ENCODE measurements at regions of chr7 and their contacts with region 1.

Region 1: DNA sequence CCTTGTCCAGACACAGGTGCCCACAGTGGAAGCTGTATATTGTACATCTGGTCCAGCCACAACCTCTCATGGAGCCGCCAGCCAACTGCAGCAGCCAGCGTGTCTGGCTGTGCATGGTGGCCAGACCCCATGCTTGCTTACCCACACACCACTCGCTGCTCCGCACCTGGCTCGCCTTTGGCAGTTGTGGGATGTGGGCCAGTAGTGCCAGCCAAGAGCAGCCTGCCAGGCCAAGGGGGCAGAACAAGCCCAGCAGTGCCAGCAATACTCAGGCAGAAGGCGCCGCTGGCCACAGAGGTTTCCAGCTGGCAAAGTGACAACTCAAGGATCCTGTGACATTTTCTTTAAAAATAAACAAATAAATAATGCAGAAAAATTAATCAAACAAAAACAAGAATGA is 11.7 kb upstream of the TMEM243 start:
- DNase-seq: peak; percentile 86 to 90
- H3K4me3 ChIP-seq: no peak overlapping the region
- H3K27ac ChIP-seq: peak overlapping the region in 2 of 3 donors; percentile 32 to 71
- H3K4me1 ChIP-seq: peaks cover 7 to 21% of the 10 kb centered on the region in 2 donors
- H3K27me3 ChIP-seq: no peaks in the 10 kb centered on the region
- CTCF ChIP-seq: no peak
- POLR2A ChIP-seq: no peak

Region 2: GRCh38 chr7:86939197-86939814 is 291.9 kb before region 1 on chr7:
- intact Hi-C with region 1: loop called (anchors 5 kb)
- DNase-seq: peak; percentile 21 to 29
- H3K4me3 ChIP-seq: no peak overlapping the region
- H3K27ac ChIP-seq: no peak overlapping the region
- H3K4me1 ChIP-seq: no peaks in the 10 kb centered on the region
- H3K27me3 ChIP-seq: no peaks in the 10 kb centered on the region
- CTCF ChIP-seq: peak; percentile 23 to 87 (median 66)
- POLR2A ChIP-seq: no peak

Region 3: GRCh38 chr7:86949052-86949778 is 282.0 kb before region 1 on chr7:
- intact Hi-C with region 1: loop called (anchors 5 kb)
- DNase-seq: no peak
- H3K4me3 ChIP-seq: no peak overlapping the region
- H3K27ac ChIP-seq: no peak overlapping the region
- H3K4me1 ChIP-seq: no peaks in the 10 kb centered on the region
- H3K27me3 ChIP-seq: no peaks in the 10 kb centered on the region
- CTCF ChIP-seq: no peak
- POLR2A ChIP-seq: no peak

Region 4: DNA sequence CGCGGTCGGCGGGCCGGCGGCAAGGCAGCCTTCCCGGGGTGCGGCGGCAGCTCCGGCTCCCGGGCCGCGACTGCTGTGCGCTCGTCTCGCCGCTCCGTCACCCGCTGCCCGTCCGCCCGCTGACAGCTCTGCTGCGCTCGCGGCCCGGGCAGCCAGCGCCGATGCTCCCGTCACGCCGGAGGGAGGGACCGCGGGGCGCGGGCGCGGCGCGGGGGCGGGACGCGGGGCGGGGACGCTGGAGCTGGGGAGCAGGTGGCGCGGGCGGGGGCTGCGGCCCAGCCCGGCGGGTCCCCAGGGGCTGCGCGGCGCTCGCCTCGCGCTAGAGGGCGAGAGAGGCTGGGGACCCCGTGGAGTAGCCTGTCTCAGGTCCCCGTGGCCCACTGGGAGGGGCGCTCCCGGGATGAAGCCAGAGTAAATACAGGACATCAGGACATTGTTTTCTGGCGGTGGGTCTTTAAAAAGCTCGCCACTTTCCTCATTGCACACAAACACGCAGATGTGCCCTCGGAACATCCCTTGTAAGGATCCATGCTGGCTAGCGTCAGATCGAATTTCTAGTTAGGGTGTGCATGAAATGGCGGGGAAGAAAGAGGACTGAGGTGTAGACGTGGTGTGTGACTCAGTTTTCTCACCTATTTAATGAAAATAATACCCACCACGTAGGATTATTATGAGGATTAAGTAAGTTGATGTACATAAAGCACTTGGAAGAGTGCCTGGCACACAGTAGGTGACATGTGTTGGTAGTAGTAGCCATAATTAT is 171.6 kb before region 1 on chr7 and contains the start of gene ELAPOR2:
- intact Hi-C with region 1: loop called (anchors 10 kb)
- DNase-seq: peak; percentile 84
- H3K4me3 ChIP-seq: peak within 1 kb of the TSS; percentile 15 to 56 (median 24)
- H3K27ac ChIP-seq: peak within 1 kb of the TSS; percentile 6 to 75 (median 59)
- H3K4me1 ChIP-seq: peaks cover 3 to 5% of the 10 kb centered on the region in 2 donors
- H3K27me3 ChIP-seq: no peaks in the 10 kb centered on the region
- CTCF ChIP-seq: peak in 4 of 6 experiments; percentile 30 to 69 (median 54)
- POLR2A ChIP-seq: peak in 1 of 2 donors; percentile 86
- total RNA-seq, gene ELAPOR2: 25.4 to 31.3 (median 25.7) TPM

Region 5: DNA sequence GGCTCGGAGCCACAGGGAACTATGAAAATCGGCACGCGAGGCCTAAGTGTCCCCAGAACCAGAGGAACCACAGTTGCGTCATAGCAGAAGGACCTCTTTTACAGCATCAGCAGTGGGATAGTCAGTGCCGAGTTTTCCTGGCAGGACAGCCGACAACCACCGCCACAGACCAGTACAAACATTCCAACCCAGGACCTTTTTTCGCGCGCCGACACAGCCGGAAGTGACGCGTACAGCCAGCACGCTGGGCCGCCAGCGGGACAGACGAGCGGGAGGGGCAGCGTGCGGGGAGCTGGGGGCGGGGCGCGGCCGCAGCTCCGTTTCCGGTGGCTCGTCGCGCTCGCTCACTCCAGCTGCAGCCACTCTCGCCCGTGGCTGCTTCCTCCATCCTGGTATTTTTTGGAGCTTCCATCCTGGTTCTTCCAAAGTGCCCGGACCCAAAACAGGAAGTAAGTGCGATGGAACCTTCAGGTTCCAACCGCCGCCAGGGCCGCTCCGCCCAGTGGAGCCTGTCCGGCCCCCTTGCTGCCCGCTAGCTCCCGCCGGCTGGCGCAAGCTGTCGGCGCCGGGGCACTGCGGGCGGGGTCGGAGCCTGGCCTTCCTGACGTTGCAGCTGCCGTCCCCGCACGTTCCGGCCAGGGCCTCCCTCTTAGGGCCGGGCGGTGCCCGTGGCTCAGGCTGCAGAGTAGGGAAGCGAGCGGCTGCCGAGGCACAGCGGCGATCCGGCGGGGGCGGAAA is 79.0 kb before region 1 on chr7 and contains the start of gene DMTF1:
- intact Hi-C with region 1: loop called (anchors 5 kb)
- DNase-seq: peak; percentile 95
- H3K4me3 ChIP-seq: peak within 1 kb of the TSS; percentile 35 to 90 (median 52)
- H3K27ac ChIP-seq: peak within 1 kb of the TSS; percentile 96 to 99 (median 99)
- H3K4me1 ChIP-seq: peaks cover 42 to 47% of the 10 kb centered on the region in 2 donors
- H3K27me3 ChIP-seq: no peaks in the 10 kb centered on the region
- CTCF ChIP-seq: peak in 2 of 6 experiments; percentile 7 to 23
- POLR2A ChIP-seq: peak in 1 of 2 donors; percentile 87
- total RNA-seq, gene DMTF1: 125 to 174 (median 146) TPM

Region 6: GRCh38 chr7:87354749-87355148 is 123.5 kb after region 1 on chr7:
- intact Hi-C with region 1: no loop called
- DNase-seq: no peak
- H3K4me3 ChIP-seq: no peak overlapping the region
- H3K27ac ChIP-seq: no peak overlapping the region
- H3K4me1 ChIP-seq: peaks cover 5 to 8% of the 10 kb centered on the region in 2 donors
- H3K27me3 ChIP-seq: no peaks in the 10 kb centered on the region
- CTCF ChIP-seq: no peak
- POLR2A ChIP-seq: no peak